ENCODE measurements at regions of chr6 and their contacts with region 1.

Region 1: DNA sequence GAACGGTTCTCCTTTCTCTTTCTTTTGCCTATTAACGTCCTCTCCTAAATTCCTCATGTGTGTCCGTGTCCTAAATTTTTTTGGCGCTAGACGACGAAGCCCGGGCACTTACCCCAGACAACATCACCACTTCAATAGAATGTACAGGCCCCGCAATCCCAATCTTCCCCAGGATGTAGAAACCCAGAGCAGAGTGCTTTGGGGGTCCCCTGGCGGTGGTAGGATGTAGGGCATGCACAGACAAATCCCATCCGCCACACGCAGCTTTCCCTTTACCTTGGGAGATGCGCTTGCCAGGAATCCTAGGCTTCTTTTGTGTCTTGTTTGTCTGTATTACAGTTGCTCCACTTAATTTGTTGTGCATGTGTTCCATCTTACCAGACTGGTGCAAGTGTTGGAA is 417.3 kb upstream of the ARID1B start:
- DNase-seq: no peak
- H3K4me3 ChIP-seq: no peak overlapping the region
- H3K27ac ChIP-seq: no peak overlapping the region
- H3K4me1 ChIP-seq: peaks cover 4% of the 10 kb centered on the region; the same call in 1 of the 2 replicates
- H3K27me3 ChIP-seq: no peaks in the 10 kb centered on the region
- CTCF ChIP-seq: no peak

Region 2: GRCh38 chr6:156189195-156189594 is 170.7 kb before region 1 on chr6:
- CTCF ChIA-PET with region 1: no interaction called
- POLR2A ChIA-PET with region 1: interaction called, 11 read pairs
- intact Hi-C with region 1: no loop called
- DNase-seq: no peak
- H3K4me3 ChIP-seq: no peak overlapping the region
- H3K27ac ChIP-seq: no peak overlapping the region
- H3K4me1 ChIP-seq: no peaks in the 10 kb centered on the region
- H3K27me3 ChIP-seq: no peaks in the 10 kb centered on the region
- CTCF ChIP-seq: no peak

Region 3: GRCh38 chr6:156423829-156424228 is 63.9 kb after region 1 on chr6:
- CTCF ChIA-PET with region 1: no interaction called
- POLR2A ChIA-PET with region 1: no interaction called
- intact Hi-C with region 1: no loop called
- DNase-seq: no peak
- H3K4me3 ChIP-seq: no peak overlapping the region
- H3K27ac ChIP-seq: no peak overlapping the region
- H3K4me1 ChIP-seq: peaks cover 13% of the 10 kb centered on the region
- H3K27me3 ChIP-seq: no peaks in the 10 kb centered on the region
- CTCF ChIP-seq: no peak

Region 4: GRCh38 chr6:156686995-156687788 is 327.3 kb after region 1 on chr6:
- CTCF ChIA-PET with region 1: no interaction called
- POLR2A ChIA-PET with region 1: no interaction called
- intact Hi-C with region 1: no loop called
- DNase-seq: peak; percentile 43 to 82
- H3K4me3 ChIP-seq: peak overlapping the region; percentile 82
- H3K27ac ChIP-seq: peak overlapping the region; percentile 86
- H3K4me1 ChIP-seq: peaks cover 16% of the 10 kb centered on the region
- H3K27me3 ChIP-seq: no peaks in the 10 kb centered on the region
- CTCF ChIP-seq: no peak

Region 5: DNA sequence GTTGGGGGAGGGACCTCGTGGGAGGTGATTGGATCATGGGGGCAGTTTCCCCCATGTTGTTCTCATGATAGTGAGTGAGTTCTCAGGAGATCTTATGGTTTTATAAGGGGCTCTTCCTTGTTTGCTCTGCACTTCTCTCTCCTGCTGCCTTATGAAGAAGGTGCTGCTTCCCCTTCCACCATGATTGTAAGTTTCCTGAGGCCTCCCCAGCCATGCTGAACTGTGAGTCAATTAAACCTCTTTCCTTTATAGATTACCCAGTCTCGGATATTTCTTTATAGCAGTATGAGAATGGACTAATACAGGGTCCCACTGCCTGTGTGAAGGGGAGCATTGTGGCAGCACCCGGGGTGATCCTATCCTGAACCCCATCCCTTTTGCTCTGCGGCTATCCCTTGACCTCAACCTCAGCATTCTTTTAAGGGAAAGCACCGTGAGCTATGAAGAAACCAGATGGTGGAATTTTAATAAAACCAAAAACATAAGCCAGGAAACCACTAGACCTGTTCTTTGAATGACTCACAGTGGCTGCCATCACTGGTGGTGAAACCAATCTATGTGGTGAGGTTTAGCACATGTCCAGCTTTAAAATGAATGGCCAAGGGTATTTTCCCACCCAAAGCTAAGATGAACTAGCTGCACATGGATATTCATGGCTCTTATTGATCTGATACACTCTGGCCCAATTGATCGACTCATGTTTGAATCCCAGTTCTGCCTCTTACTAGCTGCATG is 1083.3 kb after region 1 on chr6:
- CTCF ChIA-PET with region 1: no interaction called
- POLR2A ChIA-PET with region 1: no interaction called
- intact Hi-C with region 1: no loop called
- DNase-seq: no peak
- H3K4me3 ChIP-seq: no peak overlapping the region
- H3K27ac ChIP-seq: no peak overlapping the region
- H3K4me1 ChIP-seq: no peaks in the 10 kb centered on the region
- H3K27me3 ChIP-seq: no peaks in the 10 kb centered on the region
- CTCF ChIP-seq: no peak

Measured in PC-9 (cell line).